CD4-positive, alpha-beta memory T cell (primary cell): ENCODE measurements at regions of chr18 and their contacts with region 1.

Region 1: GRCh38 chr18:75478996-75479880 is 51.7 kb upstream of the SMIM21 start:
- DNase-seq: peak in 4 of 5 donors; percentile 41 to 48 (median 43)
- H3K4me3 ChIP-seq: no peak overlapping the region
- H3K4me3 Mint-ChIP-seq: no peak overlapping the region
- H3K27ac ChIP-seq: no peak overlapping the region
- H3K27ac Mint-ChIP-seq: no peak overlapping the region
- H3K4me1 ChIP-seq: no peaks in the 10 kb centered on the region
- H3K4me1 Mint-ChIP-seq: peaks cover 0 to 5% (median 0%) of the 10 kb centered on the region in 4 donors
- H3K27me3 ChIP-seq: no peaks in the 10 kb centered on the region
- H3K27me3 Mint-ChIP-seq: peaks cover 14 to 16% of the 10 kb centered on the region in 2 donors

Region 2: DNA sequence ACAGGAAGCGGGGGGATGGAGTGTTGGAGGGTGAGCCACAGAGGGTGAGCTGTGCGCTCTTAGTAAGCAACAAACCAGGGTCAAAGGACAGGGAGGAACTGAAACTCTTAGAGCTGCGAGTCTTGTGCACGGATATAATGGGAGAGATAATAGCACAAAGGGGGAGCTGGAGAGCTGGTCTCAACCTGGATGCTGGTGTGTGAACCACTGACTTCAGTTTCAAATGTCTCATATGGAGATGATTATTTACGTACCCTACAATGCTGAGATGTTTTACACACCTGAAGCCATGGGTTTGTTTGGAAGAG is 306.2 kb before region 1 on chr18:
- CTCF ChIA-PET with region 1: interaction called, 3 read pairs
- POLR2A ChIA-PET with region 1: no interaction called
- intact Hi-C with region 1: loop called (anchors 1 kb)
- DNase-seq: peak in 1 of 5 donors; percentile 11
- H3K4me3 ChIP-seq: no peak overlapping the region
- H3K4me3 Mint-ChIP-seq: no peak overlapping the region
- H3K27ac ChIP-seq: no peak overlapping the region
- H3K27ac Mint-ChIP-seq: peak overlapping the region in 1 of 7 donors; percentile 17
- H3K4me1 ChIP-seq: peaks cover 4% of the 10 kb centered on the region
- H3K4me1 Mint-ChIP-seq: peaks cover 0 to 9% (median 7%) of the 10 kb centered on the region in 4 donors
- H3K27me3 ChIP-seq: no peaks in the 10 kb centered on the region
- H3K27me3 Mint-ChIP-seq: peaks cover 3 to 5% of the 10 kb centered on the region in 2 donors

Region 3: DNA sequence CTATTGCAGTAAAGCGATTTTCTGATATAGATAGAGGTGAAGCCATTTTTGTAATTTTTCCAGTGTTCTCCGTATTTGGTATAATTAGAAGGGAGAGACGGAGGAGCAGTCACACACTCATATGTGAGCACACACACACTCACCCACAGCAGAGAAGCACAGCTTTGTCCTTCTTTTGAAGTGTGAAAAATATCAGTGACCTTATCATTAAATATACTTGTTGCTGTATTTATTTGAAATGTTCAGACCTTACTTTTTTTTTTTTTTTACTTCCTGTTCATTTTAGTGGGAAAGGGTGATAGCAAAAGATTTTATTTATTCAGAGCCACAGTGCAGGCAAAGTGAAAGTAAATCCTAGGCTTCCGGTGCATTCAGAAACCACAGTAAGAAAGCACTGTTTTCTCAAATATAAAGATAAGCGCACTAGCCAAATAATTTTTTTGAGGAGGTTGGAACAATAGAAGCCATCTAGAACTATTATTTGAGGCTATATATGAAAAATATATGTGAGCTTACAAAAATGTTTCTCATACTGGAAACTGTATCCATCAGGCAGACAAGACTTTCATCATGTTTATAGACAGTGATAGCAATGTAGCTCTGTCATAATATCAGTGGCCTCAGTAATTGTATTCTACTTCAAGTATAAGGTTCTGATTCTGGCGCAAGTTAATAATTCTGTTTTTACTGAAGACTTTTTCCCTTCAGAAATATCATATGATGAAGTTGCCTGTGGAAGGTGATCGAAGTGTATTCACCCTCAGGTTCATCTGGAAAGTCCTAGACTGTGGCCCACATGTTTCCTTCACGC is 231.4 kb before region 1 on chr18:
- CTCF ChIA-PET with region 1: interaction called, 4 read pairs
- POLR2A ChIA-PET with region 1: no interaction called
- intact Hi-C with region 1: loop called (anchors 2 kb)
- DNase-seq: peak in 4 of 5 donors; percentile 51 to 61 (median 56)
- H3K4me3 ChIP-seq: peak overlapping the region; percentile 19 to 49
- H3K4me3 Mint-ChIP-seq: peak overlapping the region; percentile 80 to 91 (median 88)
- H3K27ac ChIP-seq: peak overlapping the region; percentile 46
- H3K27ac Mint-ChIP-seq: peak overlapping the region; percentile 88 to 98 (median 93)
- H3K4me1 ChIP-seq: peaks cover 51% of the 10 kb centered on the region
- H3K4me1 Mint-ChIP-seq: peaks cover 51 to 92% (median 70%) of the 10 kb centered on the region in 4 donors
- H3K27me3 ChIP-seq: no peaks in the 10 kb centered on the region
- H3K27me3 Mint-ChIP-seq: no peaks in the 10 kb centered on the region

Region 4: DNA sequence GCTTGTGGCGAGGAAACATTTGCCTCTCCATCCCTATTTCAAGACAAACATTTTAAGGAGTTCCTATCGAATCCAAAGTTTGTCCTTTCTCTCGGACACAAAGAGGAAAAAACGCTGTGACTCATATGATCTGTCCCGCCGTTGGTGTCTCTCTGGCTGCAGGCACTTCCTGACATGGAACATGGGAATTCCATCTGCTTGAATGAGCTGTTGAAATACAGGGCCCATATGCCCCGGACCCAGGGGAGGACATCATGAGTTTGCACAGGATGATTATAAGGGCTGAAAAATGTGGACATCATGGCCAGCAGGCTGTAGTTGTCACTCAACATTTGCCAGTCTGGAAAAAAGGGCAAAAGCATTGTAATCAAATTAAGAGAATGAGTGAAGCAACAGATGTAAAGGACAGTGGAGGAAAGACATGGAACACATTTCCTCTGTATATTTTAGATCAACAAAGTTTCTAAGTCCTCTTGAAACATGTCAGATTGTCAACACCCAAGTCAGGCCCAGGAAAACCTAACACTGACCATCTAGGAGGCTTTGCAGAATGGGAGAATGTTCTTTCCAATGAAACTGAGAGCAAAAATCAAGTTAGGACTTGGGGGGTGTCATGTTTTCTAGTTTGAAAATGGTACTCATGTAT is 51.5 kb after region 1 on chr18:
- CTCF ChIA-PET with region 1: no interaction called
- POLR2A ChIA-PET with region 1: no interaction called
- intact Hi-C with region 1: no loop called
- DNase-seq: no peak
- H3K4me3 ChIP-seq: no peak overlapping the region
- H3K4me3 Mint-ChIP-seq: no peak overlapping the region
- H3K27ac ChIP-seq: no peak overlapping the region
- H3K27ac Mint-ChIP-seq: no peak overlapping the region
- H3K4me1 ChIP-seq: no peaks in the 10 kb centered on the region
- H3K4me1 Mint-ChIP-seq: no peaks in the 10 kb centered on the region
- H3K27me3 ChIP-seq: no peaks in the 10 kb centered on the region
- H3K27me3 Mint-ChIP-seq: peaks cover 8% of the 10 kb centered on the region in 2 donors